ENCODE measurements at regions of chr10 and their contacts with region 1.

Region 1: DNA sequence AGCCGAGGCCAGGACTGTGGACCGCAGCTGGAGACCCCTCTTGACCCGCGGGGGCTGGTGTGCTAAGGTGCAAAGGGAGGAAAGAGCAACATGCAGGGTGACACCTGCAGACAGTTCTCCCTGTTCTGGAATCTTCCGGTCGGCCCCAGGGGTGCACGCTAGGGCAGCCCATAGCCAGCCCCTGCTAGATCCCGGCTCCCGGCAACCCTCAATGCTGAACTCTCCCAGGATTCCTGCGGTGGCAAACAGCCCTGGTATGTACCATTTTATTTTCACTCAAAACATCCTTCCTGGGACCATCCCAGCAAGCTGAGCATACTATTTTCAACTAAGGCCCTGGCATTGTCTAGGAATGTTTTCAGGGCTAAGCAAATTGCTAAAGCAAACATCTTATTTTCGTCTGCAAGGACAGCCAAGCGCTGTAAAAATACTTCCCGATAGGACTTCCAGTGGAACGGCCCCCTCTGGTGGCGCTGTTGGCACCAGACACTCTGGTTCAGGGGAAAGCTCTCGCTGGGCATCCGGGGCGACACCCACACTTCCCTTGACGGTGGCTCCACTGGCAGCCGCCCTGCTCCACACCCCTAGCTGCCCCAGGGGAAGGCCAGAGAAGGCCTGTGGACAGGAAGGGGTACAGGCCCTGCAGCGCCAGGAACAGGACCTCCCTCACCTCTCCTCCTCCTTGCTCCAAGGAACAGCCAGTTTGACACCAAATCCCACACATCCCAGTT is 99.4 kb downstream of the CTBP2 start:
- DNase-seq: peak; percentile 94
- H3K4me3 ChIP-seq: peak overlapping the region in 1 of 2 donors; percentile 1
- H3K27ac ChIP-seq: peak overlapping the region; percentile 90 to 91
- H3K4me1 ChIP-seq: peaks cover 81% of the 10 kb centered on the region
- H3K27me3 ChIP-seq: no peaks in the 10 kb centered on the region
- CTCF ChIP-seq: peak; percentile 60 to 94 (median 90)
- POLR2A ChIP-seq: no peak

Region 2: GRCh38 chr10:124916585-124917427 is 144.2 kb before region 1 on chr10:
- intact Hi-C with region 1: loop called (anchors 5 kb)
- DNase-seq: peak; percentile 98
- H3K4me3 ChIP-seq: peak overlapping the region; percentile 83 to 95
- H3K27ac ChIP-seq: peak overlapping the region; percentile 98
- H3K4me1 ChIP-seq: peaks cover 6% of the 10 kb centered on the region
- H3K27me3 ChIP-seq: no peaks in the 10 kb centered on the region
- CTCF ChIP-seq: peak in 2 of 4 experiments; percentile 8 to 29
- POLR2A ChIP-seq: peak; percentile 97

Region 3: GRCh38 chr10:124992462-124993344 is 68.3 kb before region 1 on chr10:
- intact Hi-C with region 1: loop called (anchors 2 kb)
- DNase-seq: peak; percentile 73
- H3K4me3 ChIP-seq: no peak overlapping the region
- H3K27ac ChIP-seq: peak overlapping the region; percentile 36 to 51
- H3K4me1 ChIP-seq: peaks cover 12% of the 10 kb centered on the region
- H3K27me3 ChIP-seq: no peaks in the 10 kb centered on the region
- CTCF ChIP-seq: peak; percentile 61 to 86 (median 80)
- POLR2A ChIP-seq: no peak

Region 4: DNA sequence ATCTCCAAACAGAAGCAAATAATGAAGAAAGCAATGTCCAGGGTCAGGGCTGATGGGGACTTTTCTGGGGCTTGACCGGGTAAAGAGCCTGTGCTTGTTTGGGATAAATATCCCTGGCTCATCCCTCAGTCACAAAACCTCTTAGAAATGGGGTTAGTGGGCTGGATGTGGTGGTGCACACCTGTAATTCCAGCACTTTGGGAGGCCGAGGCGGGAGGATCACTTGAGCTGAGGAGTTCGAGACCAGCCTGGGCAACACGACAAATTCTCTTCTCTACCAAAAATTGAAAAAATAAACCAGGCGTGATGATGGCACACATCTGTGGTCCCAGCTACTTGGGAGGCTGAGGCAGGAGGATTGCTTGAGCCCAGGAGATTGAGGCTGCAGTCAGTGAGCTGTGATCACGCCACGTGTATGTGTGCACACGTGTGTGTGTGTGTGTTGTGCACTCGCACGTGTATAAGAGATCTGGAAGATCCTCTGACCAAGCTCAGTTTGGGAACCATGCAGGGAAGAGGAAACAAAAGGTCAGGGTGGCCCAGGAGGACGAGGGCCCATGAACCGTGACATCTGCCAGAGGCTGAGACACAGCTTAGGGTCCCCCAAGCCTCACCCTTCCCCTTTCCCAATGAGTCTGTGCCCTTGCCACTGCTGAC is 363.3 kb after region 1 on chr10:
- intact Hi-C with region 1: no loop called
- DNase-seq: no peak
- H3K4me3 ChIP-seq: no peak overlapping the region
- H3K27ac ChIP-seq: no peak overlapping the region
- H3K4me1 ChIP-seq: no peaks in the 10 kb centered on the region
- H3K27me3 ChIP-seq: no peaks in the 10 kb centered on the region
- CTCF ChIP-seq: no peak
- POLR2A ChIP-seq: no peak

Region 5: DNA sequence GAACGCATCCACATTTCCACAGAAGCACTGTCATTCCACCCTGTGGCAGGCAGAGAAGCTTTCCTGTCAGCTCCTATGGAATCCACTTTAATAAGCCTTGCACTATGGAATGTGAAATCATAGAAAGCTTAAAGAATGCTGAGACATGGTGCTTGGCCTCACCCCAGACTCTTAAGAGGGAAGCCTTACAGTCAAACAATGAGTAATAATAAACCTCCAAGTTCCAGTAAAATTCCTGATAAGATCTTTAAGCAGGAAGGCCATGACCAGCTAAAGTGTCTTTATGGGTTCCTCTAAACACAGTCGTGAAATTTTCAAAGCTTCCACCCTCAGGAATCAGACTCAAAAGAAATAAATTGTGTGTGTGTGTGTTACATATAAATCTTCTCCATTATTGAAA is 633.9 kb after region 1 on chr10:
- intact Hi-C with region 1: loop called (anchors 10 kb)
- DNase-seq: peak; percentile 53
- H3K4me3 ChIP-seq: no peak overlapping the region
- H3K27ac ChIP-seq: no peak overlapping the region
- H3K4me1 ChIP-seq: peaks cover 7% of the 10 kb centered on the region
- H3K27me3 ChIP-seq: no peaks in the 10 kb centered on the region
- CTCF ChIP-seq: no peak
- POLR2A ChIP-seq: no peak